BJ (cell line): ENCODE measurements at regions of chr1 and their contacts with region 1.

Region 1: GRCh38 chr1:30801771-30802198 is 44.2 kb upstream of the LAPTM5 start:
- DNase-seq: no peak
- H3K4me3 ChIP-seq: no peak overlapping the region
- H3K27me3 ChIP-seq: 0 out of 2 replicates have a peak, but pooled peaks cover 2% of the 10 kb centered on the region
- CTCF ChIP-seq: peak; percentile 97

Region 2: GRCh38 chr1:30718636-30719405 is 83.0 kb before region 1 on chr1:
- CTCF ChIA-PET with region 1: interaction called, 28 read pairs
- POLR2A ChIA-PET with region 1: no interaction called
- DNase-seq: peak; percentile 73
- H3K4me3 ChIP-seq: peak overlapping the region; percentile 46
- H3K27me3 ChIP-seq: no peaks in the 10 kb centered on the region; the same call in 1 of the 2 replicates
- CTCF ChIP-seq: peak; percentile 88

Region 3: DNA sequence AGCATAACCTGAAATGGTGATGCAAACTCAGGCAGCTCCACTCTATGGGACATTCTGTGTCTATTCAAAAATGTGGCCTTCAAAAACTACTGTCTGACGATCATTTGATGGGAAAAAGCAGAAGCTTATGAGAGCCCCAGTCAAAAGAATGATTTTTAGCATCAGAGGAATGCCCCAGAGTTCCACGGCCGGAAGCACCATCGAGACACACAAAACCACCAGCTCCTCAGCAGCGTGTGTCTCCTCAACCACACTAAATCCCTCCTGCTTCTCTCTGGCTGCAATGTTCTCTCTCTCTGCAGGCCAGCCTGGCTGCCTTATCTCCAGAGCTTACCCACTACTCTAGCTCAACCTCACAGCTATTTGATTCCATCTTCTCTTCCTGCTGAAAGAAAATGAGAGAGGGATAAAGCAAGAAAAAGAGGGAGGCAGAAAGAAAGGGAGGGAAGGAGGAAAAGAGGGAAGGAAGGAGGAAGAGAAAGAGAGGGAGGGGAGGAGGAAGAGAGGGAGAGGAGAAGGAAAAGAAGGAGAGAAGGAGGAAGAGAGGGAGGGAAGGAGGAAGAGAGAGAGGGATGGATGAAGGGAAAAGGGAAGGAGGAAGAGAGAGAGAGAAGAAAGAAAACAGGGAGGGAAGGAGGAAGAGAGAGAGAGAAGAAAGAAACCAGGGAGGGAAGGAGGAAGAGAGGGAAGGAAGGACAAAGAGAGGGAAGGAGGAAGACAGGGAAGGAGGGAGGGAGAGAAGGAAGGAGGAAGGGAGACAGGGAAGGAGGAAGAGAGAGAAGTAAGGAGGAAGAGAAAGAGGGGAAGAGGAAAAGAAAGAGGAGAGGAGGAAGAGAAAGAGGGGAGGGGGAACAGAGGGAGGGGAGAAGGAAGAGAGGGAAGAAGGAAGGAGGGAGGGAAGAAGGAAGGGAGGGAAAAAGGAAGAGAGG is 10.7 kb before region 1 on chr1:
- CTCF ChIA-PET with region 1: interaction called, 53 read pairs
- POLR2A ChIA-PET with region 1: no interaction called
- DNase-seq: no peak
- H3K4me3 ChIP-seq: no peak overlapping the region
- H3K27me3 ChIP-seq: peaks cover 7% of the 10 kb centered on the region
- CTCF ChIP-seq: no peak

Region 4: DNA sequence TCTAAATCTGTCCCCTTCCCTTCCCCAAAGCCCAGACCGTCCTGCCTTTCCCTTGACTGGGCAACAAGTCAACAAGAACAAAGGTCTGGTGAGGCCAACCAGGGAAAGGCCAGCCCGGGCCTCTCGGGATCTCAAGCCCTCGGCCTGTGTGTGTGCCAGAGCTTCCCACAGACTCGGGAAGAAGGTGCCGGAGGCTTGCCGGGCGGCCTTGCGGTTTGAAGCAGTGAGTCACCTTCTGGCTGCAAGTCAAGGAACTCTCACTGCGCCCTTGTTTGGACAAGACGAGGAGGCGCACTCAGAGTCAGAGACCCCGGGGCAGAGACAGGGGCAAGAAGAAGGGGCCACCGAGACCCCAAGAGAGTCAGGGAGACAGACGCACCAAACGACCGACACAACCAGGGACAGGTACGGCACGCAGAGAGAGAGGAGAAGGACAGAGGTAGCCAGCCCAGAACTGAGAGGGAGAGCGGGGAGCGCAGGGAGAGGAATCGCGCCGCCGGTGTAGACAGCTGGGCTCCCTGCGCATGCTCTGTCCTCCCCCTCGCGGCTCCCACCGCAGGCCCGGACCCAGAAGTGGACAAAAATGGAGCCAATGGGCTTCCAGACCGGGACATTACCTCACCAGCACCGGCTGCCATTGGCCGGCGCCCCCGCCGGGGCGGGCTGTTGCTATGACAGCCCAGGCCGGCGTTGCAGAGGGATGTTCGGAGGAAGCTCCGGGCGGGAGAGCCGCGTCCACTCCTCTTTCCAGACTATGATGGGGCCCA is 22.4 kb after region 1 on chr1:
- CTCF ChIA-PET with region 1: interaction called, 41 read pairs
- POLR2A ChIA-PET with region 1: no interaction called
- DNase-seq: peak; percentile 96
- H3K4me3 ChIP-seq: peak overlapping the region; percentile 46
- H3K27me3 ChIP-seq: peaks cover under 1% of the 10 kb centered on the region
- CTCF ChIP-seq: 0 out of 2 replicates have a peak, but pooled peaks have one; percentile 9

Region 5: GRCh38 chr1:30911046-30911954 is 109.5 kb after region 1 on chr1:
- CTCF ChIA-PET with region 1: interaction called, 548 read pairs
- POLR2A ChIA-PET with region 1: no interaction called
- DNase-seq: no peak
- H3K4me3 ChIP-seq: no peak overlapping the region
- H3K27me3 ChIP-seq: no peaks in the 10 kb centered on the region
- CTCF ChIP-seq: peak; percentile 88

Region 6: GRCh38 chr1:30929135-30929889 is 127.5 kb after region 1 on chr1:
- CTCF ChIA-PET with region 1: interaction called, 44 read pairs
- POLR2A ChIA-PET with region 1: no interaction called
- DNase-seq: no peak
- H3K4me3 ChIP-seq: no peak overlapping the region
- H3K27me3 ChIP-seq: no peaks in the 10 kb centered on the region
- CTCF ChIP-seq: peak; percentile 74